GM10248 (cell line): ENCODE measurements at regions of chr22 and their contacts with region 1.

Region 1: DNA sequence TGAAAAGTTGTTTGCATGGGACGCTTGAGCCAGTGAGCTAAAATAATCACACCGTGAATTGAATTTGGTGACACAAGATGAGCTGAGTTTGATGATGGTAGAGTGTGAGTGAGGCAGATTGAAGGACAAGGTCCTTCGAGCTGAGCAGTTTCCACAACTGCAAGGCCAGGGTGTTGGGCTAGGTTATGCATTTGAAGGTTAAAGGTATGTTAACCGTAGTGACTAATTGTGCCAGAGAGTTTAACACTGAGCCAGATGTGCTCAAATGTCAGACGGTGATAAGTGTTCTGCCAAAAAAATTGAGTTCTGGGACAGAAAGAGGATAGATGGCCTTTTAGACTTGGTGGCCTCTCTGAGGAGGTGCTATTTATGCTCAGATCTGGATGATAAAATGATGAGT is 89.5 kb downstream of the FAM83F start:
- DNase-seq: no peak
- CTCF ChIP-seq: no peak

Region 2: DNA sequence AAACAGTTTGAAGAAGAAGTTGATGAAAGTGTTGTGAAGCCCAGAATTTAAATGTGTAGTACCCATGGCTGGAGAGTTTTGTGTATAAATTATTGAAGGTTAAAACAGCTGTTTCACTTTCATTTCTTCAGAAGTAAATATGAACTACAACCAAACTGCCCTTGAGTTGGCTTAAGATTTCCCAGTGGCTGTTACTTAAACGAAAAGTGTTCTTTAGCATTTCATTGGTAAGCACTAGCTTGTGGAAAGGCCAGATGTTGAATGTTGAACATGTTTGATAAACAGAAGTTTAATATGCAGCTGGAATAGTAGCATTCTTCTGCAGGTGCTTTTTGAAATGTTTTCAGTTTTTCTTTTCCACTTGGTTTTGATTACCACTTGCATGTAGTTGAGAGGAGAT is 10.2 kb after region 1 on chr22:
- CTCF ChIA-PET with region 1: interaction called, 10 read pairs
- POLR2A ChIA-PET with region 1: no interaction called
- DNase-seq: peak; percentile 49
- CTCF ChIP-seq: no peak